ENCODE measurements at regions of chr11 and their contacts with region 1.

Region 1: DNA sequence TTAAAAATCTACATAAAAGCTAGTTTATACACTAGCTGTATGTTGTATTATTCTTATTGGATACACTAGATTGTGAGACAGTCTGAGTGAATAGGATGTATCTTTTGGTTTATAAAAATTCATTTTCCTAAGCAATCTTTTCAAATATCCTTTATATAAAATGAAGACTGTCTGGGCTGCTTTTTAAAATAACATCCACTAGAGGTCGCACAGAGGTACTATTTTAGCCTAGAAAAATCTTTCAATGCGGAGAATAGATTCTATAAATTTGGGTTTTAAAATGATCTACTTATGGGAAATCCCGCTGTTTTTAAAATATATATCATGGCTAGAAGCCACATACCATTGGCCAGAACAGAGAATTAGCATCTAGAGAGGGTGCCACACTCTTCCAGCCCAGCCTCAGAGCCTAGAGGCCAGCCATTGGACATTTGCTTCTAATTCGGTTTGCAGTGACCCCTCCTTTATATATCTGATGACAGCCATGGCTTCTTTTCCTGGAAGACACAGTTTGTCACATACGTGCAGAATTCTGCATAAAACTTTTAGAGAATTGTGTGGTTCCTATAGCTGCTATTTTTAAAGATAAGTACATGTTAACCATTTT is 7.3 kb downstream of the C11orf97 start:
- DNase-seq: no peak
- ATAC-seq: peak; percentile 23 to 44

Region 2: DNA sequence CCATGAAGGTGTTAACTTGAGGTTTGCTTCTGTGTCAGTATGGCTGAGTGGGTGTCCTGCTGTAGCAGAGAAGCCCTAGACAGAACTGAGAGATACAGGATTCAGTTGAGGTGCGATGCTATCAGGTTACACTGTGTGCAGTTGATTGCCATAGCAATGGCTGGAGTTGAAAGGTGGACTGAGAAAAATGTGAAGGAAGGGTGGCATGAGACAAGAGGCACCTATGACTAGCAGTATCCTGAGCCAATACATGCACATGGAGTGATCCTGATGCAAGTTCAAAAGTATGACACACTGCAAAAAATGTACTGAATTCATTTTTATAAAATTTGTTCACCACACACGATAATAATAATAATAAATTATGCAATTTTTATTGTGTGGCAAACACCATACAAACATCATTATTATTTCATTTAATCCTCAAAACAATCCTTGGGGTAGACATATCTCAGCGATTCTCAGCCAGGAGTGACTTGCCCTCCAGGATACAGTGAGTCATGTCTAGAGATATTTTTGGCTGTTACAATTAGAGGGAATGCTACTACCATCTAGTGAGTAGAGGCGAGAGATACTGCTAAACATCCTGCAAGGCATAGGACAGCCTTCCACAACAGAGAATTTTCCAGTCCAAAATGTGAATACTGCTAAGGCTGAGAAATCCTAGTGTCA is 43.7 kb after region 1 on chr11:
- intact Hi-C with region 1: loop called in 1 of 2 experiments (anchors 2 kb)
- DNase-seq: no peak
- ATAC-seq: peak; percentile 94 to 99

Region 3: GRCh38 chr11:94602430-94603372 is 83.1 kb after region 1 on chr11:
- intact Hi-C with region 1: loop called in 1 of 2 experiments (anchors 5 kb)
- DNase-seq: peak; percentile 70
- ATAC-seq: peak; percentile 67 to 85

Region 4: GRCh38 chr11:94958121-94958696 is 438.6 kb after region 1 on chr11:
- intact Hi-C with region 1: no loop called
- DNase-seq: no peak
- ATAC-seq: no peak